ENCODE measurements at regions of chr4 and their contacts with region 1.

Region 1: DNA sequence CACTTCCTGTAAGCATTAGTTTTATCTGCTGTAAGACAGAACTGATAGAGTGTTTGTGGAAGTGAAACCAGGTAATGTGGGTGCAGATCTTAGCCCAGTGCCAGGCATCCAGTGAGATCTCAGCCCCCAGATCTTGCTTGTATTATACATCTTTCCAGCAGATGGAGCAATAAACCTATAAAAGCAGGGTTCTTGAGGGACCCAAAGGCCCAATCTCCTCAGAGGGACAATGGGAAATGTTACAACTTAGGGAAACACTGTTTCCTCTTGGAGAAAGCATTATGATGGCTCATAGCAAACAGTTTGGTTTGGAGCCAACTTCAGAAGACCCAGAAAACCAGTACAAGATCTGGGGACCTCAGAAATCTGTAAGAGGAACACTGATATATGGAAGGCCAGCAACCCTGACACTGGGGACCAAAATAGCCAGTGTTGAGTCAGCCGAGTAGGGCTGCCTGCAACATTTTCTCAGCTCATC is 206.3 kb downstream of the SLC7A11 start:
- DNase-seq: peak; percentile 76
- H3K4me3 ChIP-seq: no peak overlapping the region
- H3K27ac ChIP-seq: no peak overlapping the region
- H3K4me1 ChIP-seq: no peaks in the 10 kb centered on the region
- H3K27me3 ChIP-seq: no peaks in the 10 kb centered on the region
- CTCF ChIP-seq: peak; percentile 67

Region 2: GRCh38 chr4:137819964-137820383 is 215.8 kb before region 1 on chr4:
- CTCF ChIA-PET with region 1: no interaction called
- POLR2A ChIA-PET with region 1: no interaction called
- intact Hi-C with region 1: loop called (anchors 5 kb)
- DNase-seq: peak; percentile 65
- H3K4me3 ChIP-seq: no peak overlapping the region
- H3K27ac ChIP-seq: no peak overlapping the region
- H3K4me1 ChIP-seq: no peaks in the 10 kb centered on the region
- H3K27me3 ChIP-seq: no peaks in the 10 kb centered on the region
- CTCF ChIP-seq: peak; percentile 77

Region 3: DNA sequence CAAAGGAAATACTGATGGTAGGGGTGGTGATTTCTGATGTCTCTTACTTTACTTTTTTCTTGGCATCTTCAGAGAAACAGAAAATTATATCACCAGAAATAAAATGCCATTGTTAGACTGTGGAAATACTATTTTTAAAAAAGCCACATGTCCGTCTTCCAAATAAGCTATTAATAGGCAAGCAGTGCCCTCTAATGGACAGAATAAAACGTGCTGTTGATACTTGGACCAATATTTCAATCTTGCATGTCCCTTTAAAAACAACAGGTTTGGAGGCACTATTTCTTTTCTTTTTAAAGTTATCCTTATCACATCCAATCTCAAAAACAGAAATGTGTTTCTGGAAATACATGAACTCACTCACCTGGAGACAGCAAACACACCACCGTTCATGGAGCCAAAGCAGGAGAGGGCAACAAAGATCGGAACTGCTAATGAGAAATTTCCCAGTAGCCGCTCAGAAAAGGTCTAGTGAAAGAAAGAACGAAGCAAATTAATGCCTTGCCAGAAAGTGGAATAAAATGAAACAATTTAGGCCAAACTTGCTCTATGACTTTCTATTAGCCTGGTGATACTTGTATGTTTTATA is 147.1 kb after region 1 on chr4:
- CTCF ChIA-PET with region 1: interaction called, 3 read pairs
- POLR2A ChIA-PET with region 1: no interaction called
- intact Hi-C with region 1: loop called (anchors 2 kb)
- DNase-seq: peak; percentile 63
- H3K4me3 ChIP-seq: no peak overlapping the region
- H3K27ac ChIP-seq: no peak overlapping the region
- H3K4me1 ChIP-seq: peaks cover 31% of the 10 kb centered on the region
- H3K27me3 ChIP-seq: no peaks in the 10 kb centered on the region
- CTCF ChIP-seq: peak; percentile 74

Region 4: GRCh38 chr4:138348055-138348454 is 312.2 kb after region 1 on chr4:
- CTCF ChIA-PET with region 1: no interaction called
- POLR2A ChIA-PET with region 1: no interaction called
- intact Hi-C with region 1: no loop called
- DNase-seq: no peak
- H3K4me3 ChIP-seq: no peak overlapping the region
- H3K27ac ChIP-seq: no peak overlapping the region
- H3K4me1 ChIP-seq: no peaks in the 10 kb centered on the region
- H3K27me3 ChIP-seq: no peaks in the 10 kb centered on the region
- CTCF ChIP-seq: no peak

Region 5: GRCh38 chr4:138576684-138577083 is 540.9 kb after region 1 on chr4:
- CTCF ChIA-PET with region 1: interaction called, 6 read pairs
- POLR2A ChIA-PET with region 1: no interaction called
- intact Hi-C with region 1: loop called (anchors 2 kb)
- DNase-seq: peak; percentile 73
- H3K4me3 ChIP-seq: no peak overlapping the region
- H3K27ac ChIP-seq: no peak overlapping the region
- H3K4me1 ChIP-seq: no peaks in the 10 kb centered on the region
- H3K27me3 ChIP-seq: no peaks in the 10 kb centered on the region
- CTCF ChIP-seq: peak; percentile 75

Region 6: DNA sequence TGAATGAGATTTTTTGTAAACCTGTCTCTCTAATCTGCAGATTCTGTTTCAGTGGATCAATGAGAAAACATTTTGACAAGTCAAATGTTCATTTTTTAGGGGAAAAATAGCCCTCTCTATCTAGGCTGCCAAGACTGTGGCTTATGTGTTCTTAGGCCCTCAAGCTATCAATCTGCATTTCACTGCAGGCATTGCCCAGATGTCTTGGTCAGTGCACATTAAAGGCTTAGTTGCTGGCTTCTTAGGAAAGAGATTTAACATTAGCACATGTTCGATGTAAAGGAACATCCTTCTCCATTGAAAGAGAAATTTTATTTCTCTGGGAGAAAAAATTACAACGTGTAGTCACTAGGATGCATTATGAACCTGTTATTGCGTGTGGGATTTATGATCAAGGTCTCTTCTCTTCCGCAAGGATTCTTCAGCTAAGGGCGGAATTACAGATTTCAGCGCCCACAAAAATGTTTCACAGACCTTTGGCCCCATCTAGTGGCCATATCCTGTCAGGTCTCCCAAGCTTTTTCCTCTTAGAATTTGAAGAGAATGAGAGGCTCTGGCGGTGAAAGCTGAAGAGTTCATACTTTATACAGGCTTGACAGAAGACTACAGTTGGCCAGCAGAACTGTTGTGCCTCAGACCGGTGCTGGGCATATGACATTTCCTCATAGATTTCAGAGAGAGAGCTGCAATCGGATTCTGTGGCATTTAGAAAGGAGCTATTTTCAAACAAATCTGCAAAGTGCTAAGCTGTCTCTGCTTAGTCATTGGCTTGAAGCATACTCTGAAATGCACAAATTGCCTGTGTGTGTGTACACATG is 835.1 kb after region 1 on chr4:
- CTCF ChIA-PET with region 1: no interaction called
- POLR2A ChIA-PET with region 1: no interaction called
- intact Hi-C with region 1: loop called (anchors 2 kb)
- DNase-seq: peak; percentile 85
- H3K4me3 ChIP-seq: no peak overlapping the region
- H3K27ac ChIP-seq: no peak overlapping the region
- H3K4me1 ChIP-seq: no peaks in the 10 kb centered on the region
- H3K27me3 ChIP-seq: no peaks in the 10 kb centered on the region
- CTCF ChIP-seq: peak; percentile 88

Measured in A673 (cell line).